Activated CD8-positive, alpha-beta memory T cell treated with anti-CD3 and anti-CD28 coated beads, Interleukin-2, amount 10 ng/mL, durations not matched to agents 7 days and 5 days (primary cell): ENCODE measurements at regions of chr17 and their contacts with region 1.

Region 1: DNA sequence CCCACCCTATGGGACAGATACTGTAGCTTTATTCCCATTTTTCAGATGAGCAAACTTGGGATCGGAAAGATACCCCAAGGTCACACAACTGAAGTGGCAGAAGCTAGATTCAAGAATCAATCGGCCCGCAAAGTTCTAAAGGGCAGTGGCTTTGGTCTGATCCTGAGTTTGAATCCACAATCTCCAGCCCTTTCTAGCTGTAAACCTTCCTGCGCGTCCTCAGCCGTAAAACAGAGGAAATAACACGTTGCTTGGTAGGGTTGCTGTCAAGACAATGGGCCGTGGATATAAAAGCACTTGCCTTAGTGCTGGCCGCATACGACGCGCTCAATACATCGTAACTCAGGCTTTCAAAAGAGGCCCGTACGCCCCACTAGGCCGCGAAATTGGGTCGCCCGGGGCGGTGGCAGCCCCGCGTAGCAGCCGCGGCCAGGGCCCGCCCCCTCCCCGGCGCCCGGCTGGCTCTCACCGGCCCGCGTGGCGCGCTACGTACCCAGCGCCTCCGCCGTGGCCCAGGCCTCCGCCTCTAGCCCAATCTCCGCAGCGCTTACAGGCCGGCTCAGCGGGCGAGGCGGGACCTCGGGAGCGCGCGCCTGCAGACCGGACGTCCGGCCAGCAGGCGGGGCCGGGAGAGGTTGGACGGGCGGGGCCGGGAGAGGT is at the start of gene DCAKD:
- DNase-seq: peak; percentile 96
- ATAC-seq: peak; percentile 98
- H3K4me3 Mint-ChIP-seq: peak within 1 kb of the TSS; percentile 91
- H3K27ac Mint-ChIP-seq: peak within 1 kb of the TSS; percentile 91
- H3K4me1 Mint-ChIP-seq: peaks cover 45% of the 10 kb centered on the region
- H3K27me3 Mint-ChIP-seq: no peaks in the 10 kb centered on the region
- total RNA-seq, gene DCAKD: 29.4 to 34.3 TPM

Region 2: DNA sequence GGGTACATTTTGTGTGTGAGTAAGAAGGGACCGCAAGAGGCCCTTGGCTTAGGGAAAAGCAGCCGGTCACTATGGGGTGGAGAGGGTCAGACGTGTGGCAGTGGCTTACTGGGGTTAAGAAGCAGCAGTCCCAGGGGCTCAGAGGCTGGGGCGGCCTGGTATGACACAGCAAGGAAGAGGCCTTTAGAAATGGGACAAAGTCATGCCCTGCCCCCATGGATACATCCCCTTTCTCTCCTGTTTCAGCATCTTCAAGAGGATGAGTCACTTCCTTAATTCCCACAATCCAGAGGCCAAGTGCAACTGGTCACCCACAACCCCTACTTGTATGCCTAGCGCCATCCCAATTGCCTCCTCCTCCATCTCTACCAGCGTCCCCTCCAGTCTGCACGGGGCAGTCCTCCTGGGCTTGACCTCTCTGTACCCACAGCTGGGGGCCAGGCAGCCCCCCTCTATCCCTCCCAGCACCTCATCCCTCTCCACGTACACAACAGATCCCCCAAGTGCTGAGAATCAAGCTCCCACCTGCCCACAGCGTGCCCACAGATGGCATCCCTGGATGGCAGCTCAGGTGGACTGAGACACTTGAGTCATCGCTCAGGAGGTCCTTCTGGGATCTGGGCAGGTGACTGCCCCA is 145.1 kb before region 1 on chr17:
- CTCF ChIA-PET with region 1: no interaction called
- DNase-seq: no peak
- ATAC-seq: no peak
- H3K4me3 Mint-ChIP-seq: no peak overlapping the region
- H3K27ac Mint-ChIP-seq: no peak overlapping the region
- H3K4me1 Mint-ChIP-seq: peaks cover 11% of the 10 kb centered on the region
- H3K27me3 Mint-ChIP-seq: peaks cover 15% of the 10 kb centered on the region

Region 3: GRCh38 chr17:45038728-45039634 is 12.2 kb before region 1 on chr17:
- CTCF ChIA-PET with region 1: interaction called, 11 read pairs
- DNase-seq: no peak
- ATAC-seq: no peak
- H3K4me3 Mint-ChIP-seq: no peak overlapping the region
- H3K27ac Mint-ChIP-seq: no peak overlapping the region
- H3K4me1 Mint-ChIP-seq: peaks cover 7% of the 10 kb centered on the region
- H3K27me3 Mint-ChIP-seq: no peaks in the 10 kb centered on the region